ENCODE measurements at regions of chr15 and their contacts with region 1.

Region 1: GRCh38 chr15:80970018-80970658 is 19.5 kb downstream of the MESD start:
- DNase-seq: peak; percentile 73
- ATAC-seq: no peak
- H3K4me3 Mint-ChIP-seq: no peak overlapping the region
- H3K27ac Mint-ChIP-seq: no peak overlapping the region
- H3K4me1 Mint-ChIP-seq: peaks cover 7% of the 10 kb centered on the region
- H3K27me3 Mint-ChIP-seq: no peaks in the 10 kb centered on the region

Region 2: DNA sequence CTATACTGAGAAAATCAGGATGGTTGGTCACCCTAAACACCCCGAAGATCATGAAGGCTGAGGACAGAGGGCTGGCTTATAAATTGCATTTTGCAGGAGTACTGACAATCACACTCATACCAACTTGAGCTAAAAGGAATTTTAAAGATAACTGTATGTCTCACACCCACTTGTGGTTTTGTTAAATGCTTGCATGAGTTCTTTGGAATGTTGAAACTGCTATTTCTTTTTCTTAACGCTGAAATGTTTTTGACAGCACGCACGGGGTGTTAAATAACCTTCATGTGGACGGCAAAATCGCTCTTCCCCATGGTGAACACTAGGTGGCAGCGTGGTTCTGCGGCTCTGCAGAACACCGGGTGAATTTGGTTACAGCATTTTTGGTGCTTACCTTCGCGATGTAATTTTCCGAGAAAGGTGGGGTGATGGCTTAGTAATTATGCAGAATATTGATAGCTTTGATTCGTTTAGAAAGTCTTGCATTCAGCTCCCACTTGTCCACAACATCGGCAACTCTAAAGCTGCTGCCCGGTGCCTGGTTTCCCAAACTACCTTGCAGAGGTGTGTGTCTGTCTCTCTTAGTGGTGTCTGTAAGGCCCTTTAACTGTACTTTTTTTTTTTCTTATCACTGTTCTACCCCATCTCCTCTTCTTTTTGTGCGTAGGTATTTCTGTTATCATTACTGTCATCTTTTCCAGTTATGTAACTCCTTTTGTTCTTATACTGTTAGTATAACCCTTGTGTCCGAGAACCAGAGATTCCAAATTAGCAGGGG is 514.3 kb before region 1 on chr15:
- CTCF ChIA-PET with region 1: interaction called, 23 read pairs
- POLR2A ChIA-PET with region 1: no interaction called
- DNase-seq: peak; percentile 69
- ATAC-seq: peak; percentile 74
- H3K4me3 Mint-ChIP-seq: no peak overlapping the region
- H3K27ac Mint-ChIP-seq: no peak overlapping the region
- H3K4me1 Mint-ChIP-seq: peaks cover 2% of the 10 kb centered on the region
- H3K27me3 Mint-ChIP-seq: peaks cover 10% of the 10 kb centered on the region

Region 3: DNA sequence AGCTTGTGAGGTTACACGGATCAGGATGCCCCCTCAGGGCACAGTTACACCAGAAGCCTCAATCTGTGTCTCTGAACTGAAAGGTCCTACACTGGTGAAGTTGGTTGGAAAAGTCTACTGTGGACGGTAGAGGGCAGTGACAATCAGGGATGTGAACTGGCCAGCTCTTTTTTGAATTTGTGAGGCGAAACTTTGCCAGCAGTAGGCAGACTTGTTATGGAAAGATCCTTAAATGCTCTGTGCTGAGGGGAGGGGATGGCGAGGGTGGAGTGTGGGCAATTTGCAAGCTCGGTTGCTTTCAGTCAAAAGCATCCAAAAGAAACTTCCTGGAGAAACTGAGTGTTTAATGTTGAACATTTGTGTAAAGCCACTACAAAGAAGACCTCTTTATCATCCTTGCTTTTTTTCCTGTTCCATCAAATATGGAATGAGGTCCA is 402.4 kb before region 1 on chr15:
- CTCF ChIA-PET with region 1: interaction called, 11 read pairs
- POLR2A ChIA-PET with region 1: no interaction called
- DNase-seq: peak; percentile 33
- ATAC-seq: no peak
- H3K4me3 Mint-ChIP-seq: no peak overlapping the region
- H3K27ac Mint-ChIP-seq: no peak overlapping the region
- H3K4me1 Mint-ChIP-seq: no peaks in the 10 kb centered on the region
- H3K27me3 Mint-ChIP-seq: peaks cover 8% of the 10 kb centered on the region

Region 4: GRCh38 chr15:80783260-80783659 is 186.9 kb before region 1 on chr15:
- CTCF ChIA-PET with region 1: interaction called, 11 read pairs
- POLR2A ChIA-PET with region 1: no interaction called
- DNase-seq: no peak
- ATAC-seq: no peak
- H3K4me3 Mint-ChIP-seq: no peak overlapping the region
- H3K27ac Mint-ChIP-seq: no peak overlapping the region
- H3K4me1 Mint-ChIP-seq: peaks cover 11% of the 10 kb centered on the region
- H3K27me3 Mint-ChIP-seq: peaks cover 41% of the 10 kb centered on the region

Region 5: DNA sequence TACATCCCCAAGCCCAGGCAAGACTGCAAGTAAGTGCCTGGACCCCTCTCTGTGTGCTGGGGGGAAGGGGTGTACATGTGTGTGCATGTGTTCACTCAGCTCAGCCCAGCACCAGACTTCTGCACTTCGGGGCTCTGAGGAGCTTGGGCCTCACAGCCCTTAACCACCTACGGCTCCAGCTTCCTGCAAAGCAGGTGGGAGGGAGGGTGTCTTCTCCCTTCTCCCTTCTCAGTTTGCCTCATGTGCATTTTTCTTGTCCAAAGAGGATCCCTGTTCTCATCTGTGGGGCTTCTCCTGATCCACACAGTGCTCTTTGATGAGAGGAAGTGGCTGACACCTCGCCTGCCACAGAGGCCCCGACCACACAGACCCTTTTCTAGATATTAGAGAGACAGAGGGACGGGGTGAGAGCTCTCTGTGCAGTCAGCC is 49.9 kb before region 1 on chr15:
- CTCF ChIA-PET with region 1: interaction called, 11 read pairs
- POLR2A ChIA-PET with region 1: no interaction called
- DNase-seq: peak; percentile 60
- ATAC-seq: peak; percentile 73
- H3K4me3 Mint-ChIP-seq: no peak overlapping the region
- H3K27ac Mint-ChIP-seq: no peak overlapping the region
- H3K4me1 Mint-ChIP-seq: peaks cover 23% of the 10 kb centered on the region
- H3K27me3 Mint-ChIP-seq: peaks cover 2% of the 10 kb centered on the region

Region 6: DNA sequence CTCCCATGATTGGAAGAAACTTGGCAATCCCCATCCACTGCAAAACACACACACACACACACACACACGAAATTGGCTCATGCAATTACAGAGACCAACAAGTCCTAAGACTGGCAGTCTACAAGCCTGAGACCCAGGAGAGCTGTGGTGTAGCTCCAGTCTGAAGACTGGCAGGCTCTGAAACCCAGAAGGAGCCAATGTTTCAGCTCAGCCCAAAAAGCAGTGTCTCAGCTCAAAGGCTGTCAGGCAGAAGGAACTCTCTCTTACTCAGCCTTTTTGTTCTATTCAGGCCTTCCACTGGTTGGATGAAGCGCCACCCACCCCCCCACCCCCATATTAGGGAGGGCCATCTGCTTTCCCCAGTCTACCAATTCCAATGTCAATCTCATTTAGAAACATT is 12.6 kb before region 1 on chr15:
- CTCF ChIA-PET with region 1: interaction called, 34 read pairs
- POLR2A ChIA-PET with region 1: no interaction called
- DNase-seq: no peak
- ATAC-seq: no peak
- H3K4me3 Mint-ChIP-seq: no peak overlapping the region
- H3K27ac Mint-ChIP-seq: no peak overlapping the region
- H3K4me1 Mint-ChIP-seq: peaks cover 11% of the 10 kb centered on the region
- H3K27me3 Mint-ChIP-seq: no peaks in the 10 kb centered on the region

Region 7: DNA sequence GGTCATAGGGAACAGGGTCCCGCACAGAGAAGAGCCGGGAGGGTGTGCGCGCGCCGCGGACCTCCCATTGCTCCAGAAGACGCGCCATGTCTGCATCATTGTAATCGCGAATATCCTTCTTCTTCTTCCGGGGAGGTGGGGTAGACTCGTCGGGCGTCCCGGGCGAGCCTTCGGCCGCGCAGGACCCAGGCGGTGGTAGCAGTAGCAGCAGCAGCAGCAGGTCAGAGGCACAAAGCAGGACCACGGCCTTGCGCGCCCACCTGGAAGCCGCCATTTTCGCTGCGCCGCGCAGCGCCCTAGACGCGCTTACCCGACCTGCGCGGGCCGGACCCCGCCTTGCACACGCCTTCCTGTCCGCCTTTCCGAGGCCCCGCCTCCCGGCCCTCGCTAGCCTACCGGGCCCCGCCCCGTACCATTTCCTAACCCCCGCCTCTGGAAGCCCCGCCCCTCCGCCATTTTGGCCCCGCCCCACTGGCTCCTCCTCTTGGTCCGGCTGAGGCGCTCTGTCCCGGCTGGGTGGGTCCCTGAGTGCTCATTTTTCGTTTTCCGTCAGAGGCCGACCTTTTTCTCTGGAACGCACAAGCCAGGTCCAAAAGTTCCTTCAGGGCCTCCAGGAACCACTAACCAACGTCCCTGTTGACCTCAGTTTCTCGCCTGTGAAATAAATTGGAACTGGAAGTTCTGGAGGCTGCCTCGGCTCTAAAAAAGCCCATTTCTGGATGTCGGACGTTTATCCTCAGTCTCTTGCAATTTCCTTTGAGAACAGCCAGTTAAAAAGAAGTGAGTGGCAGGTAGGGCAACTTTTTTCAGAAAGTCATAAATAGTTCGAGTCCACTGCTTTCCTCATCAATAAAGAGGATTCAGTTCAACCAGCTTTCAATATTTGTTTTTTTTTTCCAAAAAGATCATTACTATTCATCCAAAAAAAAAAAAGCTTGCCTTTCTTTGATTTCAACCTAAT is 19.7 kb after region 1 on chr15 and contains the start of gene MESD:
- CTCF ChIA-PET with region 1: interaction called, 10 read pairs
- POLR2A ChIA-PET with region 1: no interaction called
- DNase-seq: peak; percentile 98
- ATAC-seq: peak; percentile 99
- H3K4me3 Mint-ChIP-seq: peak within 1 kb of the TSS; percentile 97
- H3K27ac Mint-ChIP-seq: peak within 1 kb of the TSS; percentile 98
- H3K4me1 Mint-ChIP-seq: peaks cover 62% of the 10 kb centered on the region
- H3K27me3 Mint-ChIP-seq: no peaks in the 10 kb centered on the region
- total RNA-seq, gene MESD: 27.0 to 27.4 TPM

Region 8: GRCh38 chr15:81033508-81033907 is 63.4 kb after region 1 on chr15:
- CTCF ChIA-PET with region 1: no interaction called
- POLR2A ChIA-PET with region 1: no interaction called
- DNase-seq: no peak
- ATAC-seq: no peak
- H3K4me3 Mint-ChIP-seq: no peak overlapping the region
- H3K27ac Mint-ChIP-seq: no peak overlapping the region
- H3K4me1 Mint-ChIP-seq: peaks cover 5% of the 10 kb centered on the region
- H3K27me3 Mint-ChIP-seq: no peaks in the 10 kb centered on the region

Region 9: GRCh38 chr15:81126892-81127291 is 156.8 kb after region 1 on chr15:
- CTCF ChIA-PET with region 1: no interaction called
- POLR2A ChIA-PET with region 1: no interaction called
- DNase-seq: no peak
- ATAC-seq: no peak
- H3K4me3 Mint-ChIP-seq: no peak overlapping the region
- H3K27ac Mint-ChIP-seq: no peak overlapping the region
- H3K4me1 Mint-ChIP-seq: no peaks in the 10 kb centered on the region
- H3K27me3 Mint-ChIP-seq: peaks cover 48% of the 10 kb centered on the region